GM13977 (cell line): ENCODE measurements at regions of chr9 and their contacts with region 1.

Region 1: DNA sequence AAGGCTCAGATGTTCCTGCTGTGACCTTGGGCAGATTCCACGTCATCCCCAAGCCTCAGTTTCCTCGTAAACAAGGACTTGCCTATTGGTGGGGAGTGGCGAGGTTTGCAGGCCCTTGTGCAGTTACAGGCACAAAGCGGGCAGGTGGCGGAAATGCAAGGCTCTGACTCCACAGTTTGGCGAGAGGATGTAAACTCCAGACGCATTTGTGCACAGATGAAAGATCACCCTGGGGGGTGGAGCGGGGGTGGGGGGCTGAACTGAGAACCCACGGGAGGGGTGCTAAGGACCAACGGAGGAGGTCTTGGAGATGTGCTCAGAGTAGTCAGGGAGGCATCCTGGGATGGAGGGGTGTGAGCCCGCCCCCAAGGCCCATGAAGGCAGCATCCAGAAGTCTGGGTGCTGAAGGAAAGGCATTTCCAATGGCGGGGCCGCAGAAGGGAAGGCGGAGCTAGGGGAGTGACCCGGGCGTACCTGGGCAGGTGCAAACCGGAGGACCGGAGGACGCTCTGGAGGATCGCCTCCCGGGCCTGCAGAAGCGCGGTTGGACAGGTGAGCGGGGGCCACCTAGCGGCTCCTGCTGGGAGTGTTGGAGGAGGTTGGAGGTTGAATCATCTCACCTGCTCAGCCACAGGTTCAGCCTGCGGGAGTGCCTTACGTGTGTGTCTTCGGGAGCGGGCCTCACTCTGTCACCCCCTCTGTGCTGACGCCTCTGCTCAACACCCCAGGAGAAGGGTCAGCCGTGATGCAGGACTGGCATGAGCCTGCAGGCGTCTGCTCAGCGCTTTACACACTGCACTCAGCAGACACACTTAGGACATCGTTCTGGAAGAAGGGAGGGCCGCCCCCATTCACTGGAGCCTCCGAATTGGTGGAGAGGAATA is 1.9 kb upstream of the FIBCD1 start:
- DNase-seq: peak; percentile 92
- CTCF ChIP-seq: peak; percentile 93

Region 2: GRCh38 chr9:130693426-130694191 is 247.3 kb before region 1 on chr9 and contains the start of gene EXOSC2:
- in situ Hi-C with region 1: loop called (anchors 10 kb)
- DNase-seq: peak; percentile 98
- CTCF ChIP-seq: no peak